CD8-positive, alpha-beta T cell (primary cell): ENCODE measurements at regions of chr12 and their contacts with region 1.

Region 1: DNA sequence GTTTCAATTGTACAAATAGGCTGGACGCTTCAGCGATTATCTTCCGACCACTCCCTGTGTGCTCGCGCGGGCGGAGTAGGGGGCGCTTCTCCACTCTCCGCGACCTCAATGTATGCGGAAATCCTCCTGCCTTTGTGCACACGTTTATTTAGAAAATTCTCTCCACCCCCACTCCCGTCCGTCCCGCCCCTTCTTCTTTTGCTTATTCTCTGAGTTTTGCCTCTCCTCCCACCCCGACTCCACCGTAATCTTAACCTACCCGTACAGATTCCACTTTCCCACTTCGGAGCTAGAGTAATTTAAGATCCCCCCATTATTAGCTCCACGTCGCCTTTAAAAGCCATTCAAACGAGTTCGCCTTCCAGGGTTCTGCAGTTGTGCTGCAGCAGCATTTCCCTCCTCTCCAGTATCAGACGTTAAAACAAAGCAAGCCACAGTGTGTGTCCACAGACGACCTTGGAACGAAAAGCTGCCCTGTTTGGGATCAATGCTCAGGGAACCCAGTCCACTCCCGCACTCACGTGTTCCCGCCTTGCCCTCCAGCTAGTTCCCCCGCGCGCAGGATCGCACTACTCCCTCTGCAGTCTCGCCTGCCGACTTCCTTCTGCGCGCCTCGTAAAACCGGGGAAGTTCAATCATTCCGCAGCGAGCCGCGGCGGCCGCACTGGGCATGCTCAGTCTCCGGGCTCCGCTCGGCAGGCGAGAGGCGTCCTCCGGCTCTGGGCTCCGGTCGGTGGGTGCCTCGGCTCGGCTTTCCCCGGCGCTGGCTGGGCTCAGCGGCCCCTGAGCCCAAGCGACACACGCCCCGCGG is at the start of gene ANO6:
- DNase-seq: peak; percentile 37 to 87 (median 72)
- ATAC-seq: peak; percentile 74
- H3K4me3 ChIP-seq: peak within 1 kb of the TSS; percentile 79 to 89
- H3K4me3 Mint-ChIP-seq: peak within 1 kb of the TSS; percentile 94
- H3K27ac ChIP-seq: peak within 1 kb of the TSS; percentile 51 to 78
- H3K27ac Mint-ChIP-seq: peak within 1 kb of the TSS; percentile 92
- H3K4me1 ChIP-seq: peaks cover 24% of the 10 kb centered on the region
- H3K4me1 Mint-ChIP-seq: peaks cover 45% of the 10 kb centered on the region
- H3K27me3 ChIP-seq: no peaks in the 10 kb centered on the region
- H3K27me3 Mint-ChIP-seq: no peaks in the 10 kb centered on the region
- CTCF ChIP-seq: no peak
- total RNA-seq, gene ANO6: 7.4 to 7.5 TPM

Region 2: DNA sequence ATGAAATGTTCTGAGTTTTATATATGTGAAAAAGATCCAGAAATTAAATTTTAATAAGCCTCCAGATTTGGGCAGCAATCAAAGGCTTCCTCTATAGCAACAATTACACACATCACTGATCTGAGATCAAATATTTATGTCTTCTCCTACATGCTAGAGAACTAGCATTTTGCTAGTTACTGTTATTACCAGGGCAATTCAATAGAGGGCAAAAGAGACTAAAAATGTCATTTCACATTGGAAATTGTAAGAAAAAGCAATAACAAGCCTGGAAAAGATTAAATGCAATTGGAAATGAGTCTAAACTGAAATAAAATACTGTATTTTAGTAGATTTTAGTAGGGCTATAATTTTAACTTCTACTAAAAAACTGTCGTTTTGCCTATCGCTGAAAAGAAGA is 32.4 kb before region 1 on chr12:
- CTCF ChIA-PET with region 1: interaction called, 6 read pairs
- POLR2A ChIA-PET with region 1: no interaction called
- intact Hi-C with region 1: loop called in 1 of 2 experiments (anchors 5 kb)
- DNase-seq: no peak
- ATAC-seq: no peak
- H3K4me3 ChIP-seq: no peak overlapping the region
- H3K4me3 Mint-ChIP-seq: no peak overlapping the region
- H3K27ac ChIP-seq: no peak overlapping the region
- H3K27ac Mint-ChIP-seq: no peak overlapping the region
- H3K4me1 ChIP-seq: no peaks in the 10 kb centered on the region
- H3K4me1 Mint-ChIP-seq: no peaks in the 10 kb centered on the region
- H3K27me3 ChIP-seq: no peaks in the 10 kb centered on the region
- H3K27me3 Mint-ChIP-seq: no peaks in the 10 kb centered on the region
- CTCF ChIP-seq: no peak

Region 3: GRCh38 chr12:45200491-45201043 is 15.1 kb before region 1 on chr12:
- CTCF ChIA-PET with region 1: interaction called, 11 read pairs
- POLR2A ChIA-PET with region 1: interaction called, 6 read pairs
- intact Hi-C with region 1: no loop called
- DNase-seq: peak in 1 of 9 experiments; percentile 20
- ATAC-seq: peak; percentile 20
- H3K4me3 ChIP-seq: no peak overlapping the region
- H3K4me3 Mint-ChIP-seq: peak overlapping the region; percentile 29
- H3K27ac ChIP-seq: no peak overlapping the region
- H3K27ac Mint-ChIP-seq: no peak overlapping the region
- H3K4me1 ChIP-seq: peaks cover 16% of the 10 kb centered on the region
- H3K4me1 Mint-ChIP-seq: peaks cover 19% of the 10 kb centered on the region
- H3K27me3 ChIP-seq: no peaks in the 10 kb centered on the region
- H3K27me3 Mint-ChIP-seq: no peaks in the 10 kb centered on the region
- CTCF ChIP-seq: no peak

Region 4: DNA sequence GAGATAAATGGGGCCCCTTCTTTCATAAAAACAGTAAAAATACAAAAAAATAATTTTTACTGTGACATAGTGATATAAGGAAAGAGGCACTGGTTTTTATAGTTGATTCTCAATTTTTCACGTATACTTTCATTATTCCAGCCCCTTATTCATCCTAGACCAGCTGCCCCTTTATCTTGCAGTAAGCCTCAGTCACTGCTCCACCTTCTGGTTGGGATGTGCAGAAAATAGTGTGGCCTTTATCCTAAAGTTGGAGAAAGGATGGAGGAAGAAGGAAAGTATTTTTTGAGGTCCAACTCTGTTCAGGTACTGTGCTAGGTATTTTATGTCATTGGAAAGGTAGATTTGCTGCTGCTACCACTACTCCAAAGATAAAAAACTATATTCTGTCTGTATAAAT is 172.9 kb after region 1 on chr12:
- CTCF ChIA-PET with region 1: interaction called, 6 read pairs
- POLR2A ChIA-PET with region 1: no interaction called
- intact Hi-C with region 1: loop called in 1 of 2 experiments (anchors 1 kb)
- DNase-seq: peak in 1 of 9 experiments; percentile 31
- ATAC-seq: no peak
- H3K4me3 ChIP-seq: no peak overlapping the region
- H3K4me3 Mint-ChIP-seq: no peak overlapping the region
- H3K27ac ChIP-seq: no peak overlapping the region
- H3K27ac Mint-ChIP-seq: no peak overlapping the region
- H3K4me1 ChIP-seq: no peaks in the 10 kb centered on the region
- H3K4me1 Mint-ChIP-seq: no peaks in the 10 kb centered on the region
- H3K27me3 ChIP-seq: no peaks in the 10 kb centered on the region
- H3K27me3 Mint-ChIP-seq: no peaks in the 10 kb centered on the region
- CTCF ChIP-seq: no peak